ENCODE measurements at regions of chr7 and their contacts with region 1.

Region 1: GRCh38 chr7:148262721-148263229 is 327.8 kb upstream of the C7orf33 start:
- DNase-seq: peak; percentile 58 to 96 (median 84)

Region 2: DNA sequence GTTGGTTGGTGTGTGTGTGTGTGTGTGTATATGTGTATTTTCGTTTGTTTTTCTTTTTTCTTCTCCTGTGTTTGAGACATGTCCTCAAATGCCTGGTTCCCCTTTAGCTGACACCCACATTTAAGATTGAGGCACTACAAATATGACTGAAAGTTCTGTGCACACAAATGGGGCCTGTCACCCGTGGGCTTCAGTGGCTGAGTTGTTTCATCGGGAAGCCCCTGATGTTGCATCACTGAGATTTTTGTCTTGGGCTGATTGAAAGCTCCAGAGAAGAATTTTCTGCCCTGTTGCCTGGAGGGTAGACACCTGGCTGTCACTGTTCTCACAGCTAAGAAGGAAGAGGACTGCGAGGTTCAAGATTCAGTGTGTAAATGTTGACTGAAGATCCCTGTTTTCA is 44.0 kb after region 1 on chr7:
- intact Hi-C with region 1: no loop called
- DNase-seq: no peak

Region 3: GRCh38 chr7:148480479-148481146 is 217.8 kb after region 1 on chr7:
- intact Hi-C with region 1: loop called (anchors 5 kb)
- DNase-seq: no peak

Measured in posterior cingulate gyrus (tissue), 11 donors.